ENCODE measurements at regions of chr12 and their contacts with region 1.

Region 1: DNA sequence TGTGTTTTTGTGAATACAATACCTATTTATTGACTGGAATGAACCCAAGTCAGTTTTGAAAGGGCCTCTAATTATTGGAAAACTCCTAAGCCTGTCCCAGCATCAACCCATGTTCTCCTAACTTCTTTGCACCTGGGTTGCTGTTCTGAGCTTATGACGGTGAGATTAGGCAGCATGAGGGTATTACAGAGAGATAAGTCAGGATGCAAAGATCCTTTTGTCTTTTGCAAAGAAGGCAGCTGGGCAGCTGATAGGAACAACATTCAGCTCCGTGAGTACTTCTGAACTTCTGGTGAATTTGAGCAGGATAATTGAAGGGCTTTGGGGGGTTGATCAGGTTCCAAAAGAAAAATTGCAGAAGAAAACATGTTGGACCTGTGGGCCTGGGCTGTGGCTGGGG is at the start of gene PDE6H:
- DNase-seq: no peak
- H3K4me3 ChIP-seq: no peak within 1 kb of the TSS
- H3K27ac ChIP-seq: no peak within 1 kb of the TSS
- H3K4me1 ChIP-seq: peaks cover 0 to 26% (median 10%) of the 10 kb centered on the region in 4 experiments
- H3K27me3 ChIP-seq: no peaks in the 10 kb centered on the region

Region 2: DNA sequence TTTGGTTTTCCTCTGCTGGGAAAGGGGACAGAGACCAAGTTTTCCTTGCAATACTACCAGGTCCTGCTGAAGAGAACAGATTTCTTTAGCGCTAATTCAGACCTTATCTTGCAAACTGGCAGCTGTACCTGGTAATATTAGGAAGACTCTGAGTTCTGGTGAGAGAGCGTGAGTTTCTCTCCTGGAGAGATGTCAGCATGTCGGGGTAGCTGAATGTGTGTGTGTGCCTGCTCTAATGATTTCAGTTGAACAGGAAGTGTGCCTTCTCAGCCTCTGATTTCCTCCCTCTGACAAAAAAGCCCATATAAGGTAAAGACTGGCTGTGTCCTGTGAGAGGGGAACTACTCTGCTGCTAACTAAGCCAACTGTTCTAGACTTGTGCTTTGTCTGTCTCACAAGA is 24.1 kb before region 1 on chr12:
- CTCF ChIA-PET with region 1: no interaction called
- POLR2A ChIA-PET with region 1: no interaction called
- DNase-seq: peak; percentile 84 to 97 (median 95)
- H3K4me3 ChIP-seq: peak overlapping the region in 6 of 7 experiments; percentile 19 to 59 (median 40)
- H3K27ac ChIP-seq: peak overlapping the region; percentile 82 to 92
- H3K4me1 ChIP-seq: peaks cover 59 to 78% (median 67%) of the 10 kb centered on the region in 4 experiments
- H3K27me3 ChIP-seq: no peaks in the 10 kb centered on the region

Region 3: GRCh38 chr12:14986449-14986848 is 13.6 kb after region 1 on chr12:
- CTCF ChIA-PET with region 1: interaction called, 10 read pairs
- POLR2A ChIA-PET with region 1: no interaction called
- DNase-seq: peak in 1 of 3 donors; percentile 20
- H3K4me3 ChIP-seq: no peak overlapping the region
- H3K27ac ChIP-seq: no peak overlapping the region
- H3K4me1 ChIP-seq: peaks cover 15 to 48% (median 28%) of the 10 kb centered on the region in 4 experiments
- H3K27me3 ChIP-seq: no peaks in the 10 kb centered on the region